Naive thymus-derived CD4-positive, alpha-beta T cell (primary cell): ENCODE measurements at regions of chr3 and their contacts with region 1.

Region 1: GRCh38 chr3:32684800-32685542 is at the start of gene CNOT10:
- DNase-seq: peak; percentile 93 to 96 (median 95)
- ATAC-seq: peak; percentile 97
- H3K4me3 ChIP-seq: peak within 1 kb of the TSS; percentile 63
- H3K4me3 Mint-ChIP-seq: peak within 1 kb of the TSS; percentile 82 to 94 (median 92)
- H3K27ac ChIP-seq: peak within 1 kb of the TSS; percentile 86
- H3K27ac Mint-ChIP-seq: peak within 1 kb of the TSS; percentile 91 to 97 (median 96)
- H3K4me1 ChIP-seq: peaks cover 17 to 21% of the 10 kb centered on the region in 2 donors
- H3K4me1 Mint-ChIP-seq: peaks cover 25 to 44% (median 40%) of the 10 kb centered on the region in 7 donors
- H3K27me3 ChIP-seq: no peaks in the 10 kb centered on the region
- H3K27me3 Mint-ChIP-seq: peaks cover 0 to 5% (median 0%) of the 10 kb centered on the region in 5 donors
- total RNA-seq, gene CNOT10: 37.9 to 69.4 (median 46.9) TPM

Region 2: GRCh38 chr3:32238453-32239306 is 446.3 kb before region 1 on chr3 and contains the start of gene CMTM8:
- CTCF ChIA-PET with region 1: no interaction called
- POLR2A ChIA-PET with region 1: no interaction called
- intact Hi-C with region 1: loop called in 1 of 2 experiments (anchors 1 kb)
- DNase-seq: peak; percentile 46 to 70 (median 67)
- ATAC-seq: peak; percentile 89
- H3K4me3 ChIP-seq: peak within 1 kb of the TSS; percentile 81
- H3K4me3 Mint-ChIP-seq: peak within 1 kb of the TSS; percentile 88 to 93 (median 90)
- H3K27ac ChIP-seq: peak within 1 kb of the TSS; percentile 64
- H3K27ac Mint-ChIP-seq: peak within 1 kb of the TSS; percentile 58 to 82 (median 74)
- H3K4me1 ChIP-seq: peaks cover 13 to 17% of the 10 kb centered on the region in 2 donors
- H3K4me1 Mint-ChIP-seq: peaks cover 37 to 58% (median 50%) of the 10 kb centered on the region in 7 donors
- H3K27me3 ChIP-seq: no peaks in the 10 kb centered on the region
- H3K27me3 Mint-ChIP-seq: peaks cover 0 to 25% (median 0%) of the 10 kb centered on the region in 5 donors
- total RNA-seq, gene CMTM8: 7.4 to 13.6 (median 8.6) TPM

Region 3: DNA sequence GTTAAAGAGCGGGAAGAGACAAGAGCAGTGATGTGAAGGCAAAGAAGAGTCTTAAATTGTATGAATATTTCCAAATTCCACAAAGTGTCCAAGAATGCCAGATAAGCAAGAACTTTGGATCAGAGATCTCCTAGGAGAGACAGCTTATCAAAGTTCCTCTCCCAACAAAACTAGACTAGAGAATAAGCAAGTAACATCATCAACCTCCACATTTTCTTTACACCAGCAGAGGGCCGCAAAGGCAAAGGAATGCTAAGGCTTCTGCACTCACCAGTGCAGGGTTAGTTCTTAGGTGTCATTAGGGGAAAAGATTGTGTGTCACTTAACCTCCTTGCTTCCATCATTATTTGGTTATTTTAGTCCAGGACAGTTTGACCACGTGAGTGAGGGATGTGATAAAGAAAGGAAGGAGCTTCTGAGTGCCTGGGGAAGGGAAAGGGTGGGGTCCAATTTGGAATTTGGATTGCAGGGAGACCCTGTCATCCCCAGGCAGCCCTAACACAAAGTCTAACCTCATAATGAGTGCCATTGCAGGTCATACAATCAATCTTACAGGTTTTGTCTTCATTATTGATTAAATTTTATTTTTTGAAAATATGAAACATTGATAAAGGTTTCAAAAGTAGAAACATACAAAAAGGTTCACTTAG is 174.8 kb before region 1 on chr3:
- CTCF ChIA-PET with region 1: interaction called, 4 read pairs
- POLR2A ChIA-PET with region 1: interaction called, 4 read pairs
- intact Hi-C with region 1: loop called in 1 of 2 experiments (anchors 1 kb)
- DNase-seq: peak; percentile 30 to 75 (median 63)
- ATAC-seq: peak; percentile 97
- H3K4me3 ChIP-seq: no peak overlapping the region
- H3K4me3 Mint-ChIP-seq: no peak overlapping the region
- H3K27ac ChIP-seq: no peak overlapping the region
- H3K27ac Mint-ChIP-seq: no peak overlapping the region
- H3K4me1 ChIP-seq: no peaks in the 10 kb centered on the region
- H3K4me1 Mint-ChIP-seq: peaks cover 0 to 5% (median 2%) of the 10 kb centered on the region in 7 donors
- H3K27me3 ChIP-seq: no peaks in the 10 kb centered on the region
- H3K27me3 Mint-ChIP-seq: peaks cover 0 to under 1% (median 0%) of the 10 kb centered on the region in 5 donors

Region 4: GRCh38 chr3:32882603-32883025 is 197.6 kb after region 1 on chr3:
- CTCF ChIA-PET with region 1: no interaction called
- POLR2A ChIA-PET with region 1: no interaction called
- intact Hi-C with region 1: no loop called
- DNase-seq: peak in 1 of 9 donors; percentile 29
- ATAC-seq: no peak
- H3K4me3 ChIP-seq: no peak overlapping the region
- H3K4me3 Mint-ChIP-seq: peak overlapping the region in 5 of 10 donors; percentile 22 to 48 (median 40)
- H3K27ac ChIP-seq: no peak overlapping the region
- H3K27ac Mint-ChIP-seq: peak overlapping the region in 4 of 9 donors; percentile 7 to 77 (median 34)
- H3K4me1 ChIP-seq: peaks cover 0 to 6% of the 10 kb centered on the region in 2 donors
- H3K4me1 Mint-ChIP-seq: peaks cover 0 to 21% (median 11%) of the 10 kb centered on the region in 7 donors
- H3K27me3 ChIP-seq: no peaks in the 10 kb centered on the region
- H3K27me3 Mint-ChIP-seq: peaks cover 0 to 57% (median 4%) of the 10 kb centered on the region in 5 donors

Region 5: DNA sequence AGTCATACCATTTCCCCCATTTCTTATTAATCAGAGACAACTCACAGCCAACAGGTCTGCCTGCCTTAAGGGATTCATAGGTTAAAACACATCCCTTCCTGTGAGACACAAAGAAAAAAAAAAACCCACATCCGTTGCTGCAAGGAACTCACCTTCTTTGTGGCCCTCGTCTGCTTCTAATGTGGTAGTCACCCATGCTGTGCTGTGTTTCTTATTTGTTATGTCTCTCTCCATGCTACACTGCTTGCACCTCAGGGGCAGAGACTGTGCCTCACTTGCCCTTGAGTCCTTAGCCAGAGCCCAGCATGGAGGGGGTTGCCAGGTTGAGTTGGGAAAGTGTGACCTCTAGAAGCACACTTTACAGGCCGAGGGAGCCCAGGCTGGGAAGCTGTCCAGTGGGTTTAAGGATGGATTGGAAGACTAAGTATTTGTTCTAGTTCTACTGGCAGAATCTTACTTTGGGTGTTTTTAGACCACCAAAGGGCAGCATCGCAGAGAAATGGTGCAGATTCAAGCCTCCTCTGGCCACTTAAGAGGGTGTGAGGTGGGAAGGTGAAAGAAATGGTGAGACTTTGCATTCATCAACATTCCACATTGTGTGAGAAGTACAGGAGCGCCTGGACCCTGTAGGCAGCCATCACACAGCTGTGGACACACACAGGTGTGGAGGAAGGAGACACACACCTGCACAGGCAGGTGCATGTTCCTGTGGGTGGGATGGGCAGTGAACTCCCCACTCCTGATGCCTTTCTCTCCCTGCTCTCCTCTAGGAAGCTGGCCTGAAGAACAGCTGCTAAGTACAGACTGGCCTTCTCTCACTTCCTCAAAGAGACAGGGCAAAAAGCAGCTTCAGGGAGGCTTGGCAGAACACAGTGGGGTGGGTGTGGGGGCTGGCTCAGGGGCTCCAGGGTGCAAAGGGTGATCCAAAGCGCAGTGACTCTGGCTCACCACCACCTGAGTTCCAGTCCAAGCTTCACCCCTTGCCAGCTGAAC is 363.2 kb after region 1 on chr3:
- CTCF ChIA-PET with region 1: no interaction called
- POLR2A ChIA-PET with region 1: no interaction called
- intact Hi-C with region 1: loop called in 1 of 2 experiments (anchors 10 kb)
- DNase-seq: peak in 8 of 9 donors; percentile 50 to 89 (median 84)
- ATAC-seq: peak; percentile 91
- H3K4me3 ChIP-seq: peak overlapping the region; percentile 28
- H3K4me3 Mint-ChIP-seq: peak overlapping the region; percentile 65 to 90 (median 82)
- H3K27ac ChIP-seq: no peak overlapping the region
- H3K27ac Mint-ChIP-seq: peak overlapping the region; percentile 58 to 98 (median 79)
- H3K4me1 ChIP-seq: peaks cover 60 to 82% of the 10 kb centered on the region in 2 donors
- H3K4me1 Mint-ChIP-seq: peaks cover 53 to 78% (median 69%) of the 10 kb centered on the region in 7 donors
- H3K27me3 ChIP-seq: no peaks in the 10 kb centered on the region
- H3K27me3 Mint-ChIP-seq: no peaks in the 10 kb centered on the region

Region 6: DNA sequence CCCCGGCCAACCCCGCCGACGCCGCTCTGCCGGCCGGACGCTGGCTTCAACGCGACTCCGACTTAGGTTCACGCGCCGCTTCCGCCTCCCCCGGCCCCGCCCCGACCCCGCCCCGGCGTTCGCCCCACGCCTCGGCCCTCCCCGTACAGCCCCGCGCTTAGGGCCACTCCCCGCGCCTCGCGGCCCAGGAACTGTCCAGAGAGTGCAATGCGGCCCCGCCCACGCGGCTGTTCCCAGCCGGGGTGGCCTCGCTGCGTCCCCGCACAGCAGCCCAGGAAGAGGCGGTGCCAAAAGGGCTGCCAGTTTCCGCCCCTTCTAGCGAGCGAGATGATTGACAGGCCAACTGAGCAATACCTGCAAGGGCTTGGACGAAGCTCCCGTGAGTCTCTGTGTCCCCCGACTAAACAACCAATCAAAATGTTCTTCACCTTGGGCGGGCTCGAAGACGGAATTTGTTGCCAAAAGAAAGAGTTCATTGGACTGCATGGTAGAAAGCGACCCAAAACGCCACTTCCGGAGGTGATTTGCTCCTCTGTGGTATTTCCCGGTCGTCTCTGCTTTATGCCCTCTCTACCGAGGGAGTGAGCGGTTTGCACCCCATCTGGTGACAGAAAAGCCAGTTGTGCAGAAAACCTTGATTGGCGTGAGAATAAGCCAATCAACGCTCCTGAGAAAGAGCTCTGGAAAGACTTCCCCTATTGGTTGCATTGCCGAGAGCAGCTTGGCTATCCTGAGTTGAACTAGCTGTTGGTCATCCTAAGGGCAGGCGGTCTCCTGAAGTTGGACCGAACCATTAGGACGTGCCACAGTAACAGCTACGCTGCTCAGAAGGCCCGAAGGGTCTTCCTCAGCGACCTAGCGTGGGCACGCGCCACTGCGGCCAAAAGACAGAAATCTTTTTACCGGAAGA is 755.6 kb after region 1 on chr3 and contains the start of gene UBP1:
- CTCF ChIA-PET with region 1: no interaction called
- POLR2A ChIA-PET with region 1: no interaction called
- intact Hi-C with region 1: loop called (anchors 1 kb)
- DNase-seq: peak; percentile 90 to 99 (median 97)
- ATAC-seq: peak; percentile 91
- H3K4me3 ChIP-seq: peak within 1 kb of the TSS; percentile 82
- H3K4me3 Mint-ChIP-seq: peak within 1 kb of the TSS; percentile 93 to 100 (median 100)
- H3K27ac ChIP-seq: peak within 1 kb of the TSS; percentile 91
- H3K27ac Mint-ChIP-seq: peak within 1 kb of the TSS; percentile 99 to 100 (median 100)
- H3K4me1 ChIP-seq: peaks cover 30 to 35% of the 10 kb centered on the region in 2 donors
- H3K4me1 Mint-ChIP-seq: peaks cover 28 to 56% (median 53%) of the 10 kb centered on the region in 7 donors
- H3K27me3 ChIP-seq: no peaks in the 10 kb centered on the region
- H3K27me3 Mint-ChIP-seq: no peaks in the 10 kb centered on the region
- total RNA-seq, gene UBP1: 61.4 to 116 (median 86.0) TPM